Activated CD4-positive, alpha-beta memory T cell treated with anti-CD3 and anti-CD28 coated beads, Interleukin-2, amount 10 ng/mL, durations not matched to agents 7 days and 5 days (primary cell): ENCODE measurements at regions of chr7 and their contacts with region 1.

Region 1: GRCh38 chr7:56051339-56052191 is at the starts of genes CCT6A and PSPH:
- DNase-seq: peak; percentile 91
- H3K4me3 Mint-ChIP-seq: peak within 1 kb of the TSS; percentile 96
- H3K27ac Mint-ChIP-seq: peak within 1 kb of the TSS; percentile 89
- H3K4me1 Mint-ChIP-seq: peaks cover 50% of the 10 kb centered on the region
- H3K27me3 Mint-ChIP-seq: no peaks in the 10 kb centered on the region
- total RNA-seq, gene CCT6A: 105 TPM
- total RNA-seq, gene PSPH: 12.0 to 13.7 TPM

Region 2: DNA sequence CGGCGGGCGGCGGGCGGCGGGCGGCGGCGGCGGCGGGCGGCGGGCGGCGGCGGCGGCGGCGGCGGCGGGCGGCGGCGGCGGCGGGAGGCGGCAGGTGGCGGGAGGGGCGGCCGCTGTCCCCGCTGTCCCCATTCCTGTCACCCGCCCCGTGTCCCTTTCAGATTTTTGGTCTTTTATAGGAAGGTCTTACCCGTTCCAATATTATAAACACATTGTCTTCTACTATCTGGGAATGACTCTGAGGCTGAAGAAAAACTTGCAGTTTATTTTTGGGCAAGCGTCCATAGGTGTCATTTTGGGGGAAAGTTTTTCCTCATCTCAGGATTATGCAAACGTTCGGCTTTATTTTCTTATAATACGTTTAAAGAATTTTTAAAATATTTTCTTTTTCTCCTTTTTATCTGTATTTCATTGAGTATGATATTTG is 163.7 kb before region 1 on chr7:
- CTCF ChIA-PET with region 1: no interaction called
- POLR2A ChIA-PET with region 1: no interaction called
- DNase-seq: no peak
- H3K4me3 Mint-ChIP-seq: peak overlapping the region; percentile 86
- H3K27ac Mint-ChIP-seq: peak overlapping the region; percentile 48
- H3K4me1 Mint-ChIP-seq: peaks cover 9% of the 10 kb centered on the region
- H3K27me3 Mint-ChIP-seq: no peaks in the 10 kb centered on the region

Region 3: DNA sequence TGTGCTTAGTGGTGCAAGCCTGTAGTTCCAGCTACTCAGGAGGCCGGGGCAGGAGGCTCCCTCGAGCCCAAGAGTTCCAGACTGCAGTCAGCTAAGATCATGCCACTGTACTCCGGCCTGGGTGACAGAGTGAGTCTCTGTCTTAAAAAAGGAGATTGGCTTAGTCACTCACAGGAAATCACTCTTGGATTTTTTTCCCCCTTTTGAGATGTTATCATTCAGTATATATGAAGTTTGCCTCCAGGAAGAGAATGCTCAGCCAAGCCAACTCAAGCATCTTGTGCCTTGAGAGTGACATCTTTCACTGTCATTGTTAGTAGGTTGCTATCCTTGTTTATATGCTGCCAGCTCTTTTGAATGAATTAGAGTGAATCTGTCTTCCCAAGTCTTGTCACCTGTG is 59.2 kb before region 1 on chr7:
- CTCF ChIA-PET with region 1: no interaction called
- POLR2A ChIA-PET with region 1: no interaction called
- DNase-seq: no peak
- H3K4me3 Mint-ChIP-seq: no peak overlapping the region
- H3K27ac Mint-ChIP-seq: no peak overlapping the region
- H3K4me1 Mint-ChIP-seq: peaks cover 2% of the 10 kb centered on the region
- H3K27me3 Mint-ChIP-seq: no peaks in the 10 kb centered on the region

Region 4: DNA sequence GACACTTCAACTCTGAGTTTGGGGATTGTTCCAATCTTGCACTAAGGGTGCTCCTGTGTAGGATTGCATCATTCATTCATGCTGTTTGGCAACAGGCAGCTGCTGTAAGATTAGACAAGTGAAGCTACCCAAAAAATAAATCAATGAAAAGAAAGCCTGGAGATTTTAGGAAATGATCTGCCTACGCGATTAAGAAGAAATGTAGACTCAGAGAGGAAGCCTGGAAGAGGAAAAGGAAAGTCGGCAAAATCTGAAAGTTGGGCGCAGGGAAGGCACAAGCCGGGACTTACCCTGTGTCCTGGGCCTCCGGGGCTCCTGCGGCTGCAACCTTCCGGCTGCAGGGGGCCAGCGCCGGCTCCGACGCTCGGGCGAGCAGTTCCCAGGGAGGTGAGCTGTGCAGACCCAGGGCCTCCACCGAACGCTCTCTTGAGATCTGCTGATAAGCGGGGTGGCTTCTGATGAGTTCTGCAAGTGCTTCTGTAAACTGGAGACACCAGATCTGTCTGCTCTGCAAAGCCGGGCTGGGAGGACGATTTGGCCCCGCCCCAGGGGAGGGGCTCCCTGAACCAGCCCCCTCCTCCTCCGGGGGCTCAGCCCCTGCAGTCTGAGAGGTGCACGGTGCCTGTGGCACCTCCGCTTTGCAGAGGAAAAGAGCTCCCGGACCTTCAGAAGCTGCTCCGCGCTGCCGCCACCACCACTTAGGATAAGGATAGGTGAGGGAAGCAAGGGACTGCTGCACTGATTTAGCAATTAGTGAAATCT is 17.7 kb before region 1 on chr7:
- CTCF ChIA-PET with region 1: interaction called, 7 read pairs
- POLR2A ChIA-PET with region 1: interaction called, 11 read pairs
- DNase-seq: peak; percentile 73
- H3K4me3 Mint-ChIP-seq: peak overlapping the region; percentile 82
- H3K27ac Mint-ChIP-seq: peak overlapping the region; percentile 53
- H3K4me1 Mint-ChIP-seq: peaks cover 16% of the 10 kb centered on the region
- H3K27me3 Mint-ChIP-seq: no peaks in the 10 kb centered on the region

Region 5: DNA sequence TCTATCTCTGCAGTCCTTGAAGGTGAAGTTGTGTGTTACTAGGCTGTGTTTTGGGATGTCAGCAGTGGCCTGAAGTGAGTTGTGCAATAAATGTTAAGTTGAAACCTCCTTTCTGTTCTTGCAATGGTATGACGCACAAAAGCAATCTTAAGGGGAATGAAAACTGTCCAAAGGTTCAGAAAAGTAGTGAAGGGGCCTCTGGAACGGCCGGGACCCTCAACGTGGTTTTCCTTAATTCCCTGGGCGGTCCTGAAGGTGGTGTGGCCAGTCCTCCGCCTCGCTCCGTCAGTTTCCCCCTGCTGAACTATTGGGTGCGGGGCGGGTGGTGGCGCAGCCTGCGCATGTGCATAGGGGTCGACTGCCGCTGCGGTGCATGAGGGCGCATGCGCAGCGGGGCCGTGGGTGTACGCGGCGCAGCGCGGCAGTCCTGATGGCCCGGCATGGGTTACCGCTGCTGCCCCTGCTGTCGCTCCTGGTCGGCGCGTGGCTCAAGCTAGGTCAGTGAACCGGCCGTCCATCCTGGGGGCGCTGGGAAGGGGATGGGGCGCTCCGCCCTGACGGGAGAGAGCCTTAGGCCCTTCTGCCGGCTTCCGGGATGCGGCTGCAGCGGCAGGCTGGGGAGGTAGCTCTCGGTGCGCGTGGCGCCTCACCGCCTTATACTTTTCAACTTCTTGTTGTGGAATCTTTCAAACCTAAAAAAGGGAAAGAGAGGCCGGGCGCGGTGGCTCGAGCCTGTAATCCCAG is 12.5 kb after region 1 on chr7 and contains the start of gene SUMF2:
- CTCF ChIA-PET with region 1: interaction called, 18 read pairs
- POLR2A ChIA-PET with region 1: interaction called, 40 read pairs
- DNase-seq: peak; percentile 89
- H3K4me3 Mint-ChIP-seq: peak within 1 kb of the TSS; percentile 87
- H3K27ac Mint-ChIP-seq: peak within 1 kb of the TSS; percentile 82
- H3K4me1 Mint-ChIP-seq: peaks cover 43% of the 10 kb centered on the region
- H3K27me3 Mint-ChIP-seq: no peaks in the 10 kb centered on the region
- total RNA-seq, gene SUMF2: 118 to 119 TPM